Caco-2 (cell line): ENCODE measurements at regions of chr1 and their contacts with region 1.

Region 1: DNA sequence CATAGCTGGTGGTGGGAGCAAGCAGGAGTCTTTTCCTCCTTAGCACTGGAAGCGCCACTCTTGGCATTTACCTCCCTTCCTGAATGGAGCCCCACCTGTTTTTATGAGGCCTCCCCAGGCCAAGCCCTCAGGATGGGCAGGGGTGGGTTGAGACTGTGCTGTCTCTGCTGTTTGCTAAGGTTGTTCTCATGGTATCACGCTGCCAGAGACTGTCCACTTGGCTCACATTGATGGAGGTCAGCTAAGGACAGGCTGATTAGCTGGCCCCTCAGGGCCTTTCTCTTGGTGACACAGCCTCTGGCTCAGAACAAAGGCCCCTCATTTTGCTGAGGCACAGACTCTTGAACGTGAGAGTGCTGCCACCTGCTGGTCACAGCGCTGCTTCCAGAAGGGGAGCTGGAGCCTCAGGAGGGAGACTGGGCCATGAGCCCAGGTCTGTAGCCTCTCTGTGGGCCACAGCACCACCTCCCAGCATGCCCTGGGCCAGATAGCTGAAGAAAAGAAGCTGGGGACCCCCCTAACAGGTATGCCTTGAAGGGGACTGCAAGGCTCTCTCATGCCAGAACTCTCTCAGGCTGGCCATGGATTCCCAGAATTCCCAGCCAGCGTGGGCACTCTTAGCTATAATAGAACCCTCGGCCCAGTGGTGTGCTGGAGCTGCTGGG is 85.6 kb downstream of the CD58 start:
- DNase-seq: peak; percentile 85 to 87
- H3K4me3 ChIP-seq: no peak overlapping the region
- H3K4me3 Mint-ChIP-seq: no peak overlapping the region
- H3K27ac Mint-ChIP-seq: no peak overlapping the region
- H3K4me1 ChIP-seq: peaks cover 27% of the 10 kb centered on the region
- H3K4me1 Mint-ChIP-seq: no peaks in the 10 kb centered on the region
- H3K27me3 ChIP-seq: no peaks in the 10 kb centered on the region
- H3K27me3 Mint-ChIP-seq: no peaks in the 10 kb centered on the region
- CTCF ChIP-seq: peak; percentile 59 to 67

Region 2: GRCh38 chr1:116321766-116322175 is 163.4 kb before region 1 on chr1:
- CTCF ChIA-PET with region 1: interaction called, 5 read pairs
- POLR2A ChIA-PET with region 1: no interaction called
- intact Hi-C with region 1: loop called (anchors 5 kb)
- DNase-seq: no peak
- H3K4me3 ChIP-seq: no peak overlapping the region
- H3K4me3 Mint-ChIP-seq: no peak overlapping the region
- H3K27ac Mint-ChIP-seq: no peak overlapping the region
- H3K4me1 ChIP-seq: peaks cover 44% of the 10 kb centered on the region
- H3K4me1 Mint-ChIP-seq: peaks cover 36% of the 10 kb centered on the region
- H3K27me3 ChIP-seq: no peaks in the 10 kb centered on the region
- H3K27me3 Mint-ChIP-seq: no peaks in the 10 kb centered on the region
- CTCF ChIP-seq: no peak

Region 3: GRCh38 chr1:116401646-116402176 is 83.5 kb before region 1 on chr1:
- CTCF ChIA-PET with region 1: interaction called, 10 read pairs
- POLR2A ChIA-PET with region 1: no interaction called
- intact Hi-C with region 1: no loop called
- DNase-seq: peak; percentile 10 to 42
- H3K4me3 ChIP-seq: no peak overlapping the region
- H3K4me3 Mint-ChIP-seq: no peak overlapping the region
- H3K27ac Mint-ChIP-seq: no peak overlapping the region
- H3K4me1 ChIP-seq: peaks cover 5% of the 10 kb centered on the region; the same call in 1 of the 2 replicates
- H3K4me1 Mint-ChIP-seq: peaks cover 7% of the 10 kb centered on the region
- H3K27me3 ChIP-seq: no peaks in the 10 kb centered on the region
- H3K27me3 Mint-ChIP-seq: no peaks in the 10 kb centered on the region
- CTCF ChIP-seq: no peak

Region 4: GRCh38 chr1:116474921-116475849 is 10.0 kb before region 1 on chr1:
- CTCF ChIA-PET with region 1: interaction called, 10 read pairs
- POLR2A ChIA-PET with region 1: no interaction called
- intact Hi-C with region 1: no loop called
- DNase-seq: peak; percentile 85 to 92
- H3K4me3 ChIP-seq: peak overlapping the region; percentile 5; the same call in 1 of the 2 replicates
- H3K4me3 Mint-ChIP-seq: peak overlapping the region; percentile 49
- H3K27ac Mint-ChIP-seq: peak overlapping the region; percentile 70
- H3K4me1 ChIP-seq: peaks cover 65% of the 10 kb centered on the region
- H3K4me1 Mint-ChIP-seq: peaks cover 30% of the 10 kb centered on the region
- H3K27me3 ChIP-seq: no peaks in the 10 kb centered on the region
- H3K27me3 Mint-ChIP-seq: no peaks in the 10 kb centered on the region
- CTCF ChIP-seq: no peak